K562 (cell line): ENCODE measurements at regions of chr16 and their contacts with region 1.

Region 1: DNA sequence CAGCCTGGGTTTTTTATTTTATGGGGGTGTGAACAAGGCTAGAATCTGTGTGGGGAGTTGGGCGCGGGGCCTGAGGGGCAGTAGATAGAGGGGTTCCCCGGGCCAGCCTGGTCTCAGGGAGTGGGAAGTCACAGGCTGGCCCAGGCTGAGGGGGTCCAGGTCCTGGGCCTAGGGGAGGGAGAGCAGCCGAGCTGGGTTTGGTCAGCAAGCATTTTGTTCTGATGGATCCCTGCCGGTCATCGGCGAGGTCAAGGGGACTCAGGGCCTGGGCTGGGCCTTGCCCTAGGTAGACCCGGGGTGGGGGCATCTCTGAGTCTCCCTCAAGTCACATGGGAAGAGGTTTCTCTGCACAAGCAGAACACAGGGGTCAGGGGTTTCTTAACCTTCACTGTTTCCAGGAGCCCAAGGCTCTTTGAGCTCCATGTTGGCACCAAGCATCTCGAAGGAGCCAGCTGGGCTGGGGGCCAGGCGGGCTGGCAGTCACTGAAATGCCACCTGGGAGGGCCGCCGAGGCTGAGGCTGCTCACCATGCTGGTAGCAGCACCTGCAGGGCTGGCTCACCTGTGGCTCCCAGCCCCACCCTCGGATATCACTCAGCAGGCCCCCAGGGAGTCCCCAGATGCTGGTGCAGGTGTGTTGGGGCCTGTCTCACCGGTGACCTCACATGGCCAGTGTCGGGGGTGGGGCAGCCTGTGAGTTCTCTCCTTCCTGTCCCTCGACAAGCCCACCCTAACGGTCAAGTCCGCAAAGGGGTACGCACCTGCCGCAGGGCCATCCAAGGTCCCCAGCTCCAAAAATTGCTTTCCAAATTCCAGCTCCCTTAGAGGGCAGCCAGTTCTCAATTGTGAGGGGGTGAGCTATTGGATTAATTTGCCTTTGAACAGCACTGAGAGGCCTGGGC is 41.0 kb downstream of the SLC7A5 start:
- DNase-seq: no peak
- ATAC-seq: peak; percentile 25
- H3K4me3 ChIP-seq: no peak overlapping the region
- H3K27ac ChIP-seq: no peak overlapping the region
- H3K4me1 ChIP-seq: peaks cover 0 to 50% of the 10 kb centered on the region in 2 experiments; a peak in 2 of 5 replicates
- H3K27me3 ChIP-seq: peaks cover 14 to 23% of the 10 kb centered on the region in 2 experiments; a peak in 4 of 5 replicates
- CTCF ChIP-seq: no peak
- EP300 ChIP-seq: no peak
- POLR2A ChIP-seq: peak; percentile 19
- RAD21 ChIP-seq: no peak

Region 2: DNA sequence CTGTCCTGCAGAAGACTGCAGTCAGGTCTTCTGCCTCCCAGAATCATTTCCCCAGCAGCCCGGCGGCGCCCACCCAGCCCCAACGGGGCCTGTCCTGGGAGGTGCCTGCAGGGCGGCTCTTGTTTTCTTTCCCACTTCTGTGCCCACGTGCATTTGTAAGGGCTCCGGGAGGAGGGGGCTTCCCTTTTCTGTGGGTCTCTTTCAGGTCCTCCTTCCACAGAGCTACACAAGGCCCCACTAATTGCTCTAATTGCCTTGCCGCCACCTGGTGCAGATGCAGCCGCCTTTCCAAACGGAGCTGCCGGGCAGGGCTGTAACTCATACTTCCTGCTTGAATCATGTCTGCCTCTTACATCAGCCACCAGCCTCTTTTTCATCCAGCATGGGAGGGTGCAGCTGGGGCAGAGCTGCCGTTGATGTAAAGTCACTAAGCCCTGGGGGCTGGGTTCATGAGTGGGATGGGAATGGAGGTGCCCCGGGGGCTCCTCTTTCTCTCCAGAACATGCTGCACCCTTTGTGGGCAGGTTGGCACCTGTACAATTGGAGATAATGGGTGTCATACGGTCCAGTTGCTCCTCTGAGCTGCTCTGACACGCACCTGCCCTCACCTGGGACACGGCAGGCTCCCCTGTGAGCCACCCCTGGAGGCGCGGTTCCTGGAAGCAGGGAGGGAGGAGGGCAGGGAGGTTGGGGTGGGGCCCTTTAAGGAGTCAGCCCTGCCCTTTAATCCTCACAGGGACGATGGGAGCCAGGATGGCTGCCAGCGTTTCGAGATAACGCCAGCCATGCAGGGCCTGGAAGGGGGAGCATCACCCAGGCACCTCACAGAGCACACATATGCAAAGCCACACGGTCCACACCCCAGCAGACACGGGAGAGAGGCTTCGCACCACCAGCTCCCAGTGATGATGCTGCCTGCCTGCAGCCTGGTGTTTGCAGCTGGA is 21.4 kb before region 1 on chr16:
- CTCF ChIA-PET with region 1: no interaction called
- POLR2A ChIA-PET with region 1: interaction called, 10 read pairs
- in situ Hi-C with region 1: no loop called
- intact Hi-C with region 1: no loop called
- DNase-seq: peak; percentile 40 to 56 (median 51)
- ATAC-seq: peak; percentile 87
- H3K4me3 ChIP-seq: no peak overlapping the region
- H3K27ac ChIP-seq: peak overlapping the region; percentile 61; the same call in 2 of the 3 replicates
- H3K4me1 ChIP-seq: peaks cover 30 to 31% of the 10 kb centered on the region in 2 experiments
- H3K27me3 ChIP-seq: peaks cover 0 to 6% of the 10 kb centered on the region in 2 experiments; a peak in 1 of 5 replicates
- CTCF ChIP-seq: no peak
- EP300 ChIP-seq: peak; percentile 90
- POLR2A ChIP-seq: no peak
- RAD21 ChIP-seq: peak; percentile 22 to 27; a peak in 2 of 4 replicates

Region 3: GRCh38 chr16:87815567-87815966 is 12.8 kb before region 1 on chr16:
- CTCF ChIA-PET with region 1: no interaction called
- POLR2A ChIA-PET with region 1: interaction called, 18 read pairs
- in situ Hi-C with region 1: no loop called
- intact Hi-C with region 1: no loop called
- DNase-seq: no peak
- ATAC-seq: peak; percentile 34; the same call in 1 of the 3 replicates
- H3K4me3 ChIP-seq: no peak overlapping the region
- H3K27ac ChIP-seq: no peak overlapping the region
- H3K4me1 ChIP-seq: peaks cover 0 to 5% of the 10 kb centered on the region in 2 experiments; a peak in 2 of 5 replicates
- H3K27me3 ChIP-seq: peaks cover 2 to 34% of the 10 kb centered on the region in 2 experiments; a peak in 2 of 5 replicates
- CTCF ChIP-seq: no peak
- EP300 ChIP-seq: no peak
- POLR2A ChIP-seq: no peak
- RAD21 ChIP-seq: no peak

Region 4: GRCh38 chr16:87847785-87848675 is 19.7 kb after region 1 on chr16:
- CTCF ChIA-PET with region 1: no interaction called
- POLR2A ChIA-PET with region 1: interaction called, 10 read pairs
- in situ Hi-C with region 1: no loop called
- intact Hi-C with region 1: no loop called
- DNase-seq: no peak
- ATAC-seq: no peak
- H3K4me3 ChIP-seq: no peak overlapping the region
- H3K27ac ChIP-seq: no peak overlapping the region
- H3K4me1 ChIP-seq: peaks cover 8 to 82% of the 10 kb centered on the region in 2 experiments
- H3K27me3 ChIP-seq: no peaks in the 10 kb centered on the region
- CTCF ChIP-seq: no peak
- EP300 ChIP-seq: no peak
- POLR2A ChIP-seq: no peak
- RAD21 ChIP-seq: no peak